ENCODE measurements at regions of chr2 and their contacts with region 1.

Region 1: DNA sequence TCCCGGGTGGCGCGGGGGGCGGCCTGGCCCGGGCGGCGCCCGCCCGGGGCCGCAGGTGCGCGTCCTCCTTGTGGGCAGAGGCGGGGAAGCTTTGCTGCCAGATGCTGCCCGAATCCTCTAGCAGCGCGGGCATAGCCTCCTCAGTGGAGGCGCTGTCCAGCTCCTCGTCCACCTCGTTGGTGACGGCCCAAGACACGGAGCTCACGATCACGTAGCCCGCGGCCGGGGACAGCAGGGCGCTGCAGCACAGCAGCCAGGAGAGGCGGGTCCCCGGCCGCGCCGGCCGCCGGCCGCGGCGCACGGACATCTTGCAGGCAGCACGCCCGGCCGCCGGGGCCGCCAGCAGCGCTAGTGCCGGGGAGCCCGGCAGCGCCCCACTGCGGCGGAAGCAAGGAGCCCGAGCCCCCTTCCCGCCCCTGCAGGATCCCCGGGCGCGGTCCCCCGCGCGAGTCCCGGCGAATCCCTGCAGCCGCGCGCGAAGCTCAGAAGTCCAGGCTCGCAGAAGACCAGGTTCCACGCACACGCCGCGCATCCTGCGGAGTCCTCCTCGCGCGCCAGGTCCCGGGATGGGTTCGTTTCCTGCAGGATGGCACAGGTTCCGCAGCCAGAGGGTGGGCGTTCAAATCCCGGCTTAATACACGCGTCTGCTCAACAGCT is at the start of gene CREG2:
- DNase-seq: peak; percentile 34
- H3K4me3 Mint-ChIP-seq: peak within 1 kb of the TSS; percentile 62
- H3K27ac Mint-ChIP-seq: no peak within 1 kb of the TSS
- H3K4me1 Mint-ChIP-seq: peaks cover 5% of the 10 kb centered on the region
- H3K27me3 Mint-ChIP-seq: no peaks in the 10 kb centered on the region
- CTCF ChIP-seq: peak; percentile 66
- total RNA-seq, gene CREG2: not detected in 2 replicates

Region 2: DNA sequence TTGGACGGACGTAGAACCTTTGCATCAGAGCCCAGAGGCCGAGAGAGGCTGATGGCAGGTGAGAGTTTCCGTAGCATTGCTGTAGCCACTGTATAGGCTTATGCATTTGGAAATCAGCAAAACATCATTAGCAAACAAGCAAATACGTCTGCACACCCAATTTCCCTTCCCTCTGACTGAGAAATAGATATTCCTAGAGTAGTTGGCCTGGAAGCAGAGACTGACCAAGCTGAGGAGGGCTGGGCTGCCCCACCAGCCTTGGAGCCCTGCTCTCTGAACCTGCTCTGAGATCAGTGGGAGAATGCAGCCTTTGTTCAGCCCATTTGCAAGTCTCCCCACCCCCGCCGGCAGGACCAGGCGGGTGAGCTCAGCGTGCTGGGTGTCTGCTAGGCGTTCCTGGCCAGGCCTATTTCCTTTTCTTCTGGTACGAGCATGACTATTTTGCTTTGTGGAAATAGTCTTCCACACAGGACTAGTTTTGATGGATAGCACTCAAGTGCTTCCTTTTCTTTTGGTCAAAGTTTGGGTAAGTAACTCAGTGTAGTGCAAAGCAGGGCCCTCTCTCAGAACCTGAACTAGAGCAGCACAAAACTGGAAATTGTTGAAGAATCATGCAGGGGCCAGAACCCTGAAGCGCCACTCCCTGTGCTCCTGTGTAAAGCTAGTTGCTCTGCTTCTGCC is 56.9 kb before region 1 on chr2:
- CTCF ChIA-PET with region 1: interaction called, 12 read pairs
- POLR2A ChIA-PET with region 1: interaction called, 3 read pairs
- intact Hi-C with region 1: no loop called
- DNase-seq: no peak
- H3K4me3 Mint-ChIP-seq: no peak overlapping the region
- H3K27ac Mint-ChIP-seq: no peak overlapping the region
- H3K4me1 Mint-ChIP-seq: no peaks in the 10 kb centered on the region
- H3K27me3 Mint-ChIP-seq: no peaks in the 10 kb centered on the region
- CTCF ChIP-seq: no peak

Region 3: GRCh38 chr2:101341901-101342624 is 45.2 kb before region 1 on chr2:
- CTCF ChIA-PET with region 1: interaction called, 23 read pairs
- POLR2A ChIA-PET with region 1: interaction called, 4 read pairs
- intact Hi-C with region 1: loop called (anchors 2 kb)
- DNase-seq: peak; percentile 78
- H3K4me3 Mint-ChIP-seq: no peak overlapping the region
- H3K27ac Mint-ChIP-seq: no peak overlapping the region
- H3K4me1 Mint-ChIP-seq: peaks cover 5% of the 10 kb centered on the region
- H3K27me3 Mint-ChIP-seq: no peaks in the 10 kb centered on the region
- CTCF ChIP-seq: peak; percentile 78

Region 4: GRCh38 chr2:101349893-101350662 is 37.2 kb before region 1 on chr2:
- CTCF ChIA-PET with region 1: interaction called, 27 read pairs
- POLR2A ChIA-PET with region 1: interaction called, 3 read pairs
- intact Hi-C with region 1: no loop called
- DNase-seq: peak; percentile 20
- H3K4me3 Mint-ChIP-seq: no peak overlapping the region
- H3K27ac Mint-ChIP-seq: no peak overlapping the region
- H3K4me1 Mint-ChIP-seq: peaks cover 6% of the 10 kb centered on the region
- H3K27me3 Mint-ChIP-seq: no peaks in the 10 kb centered on the region
- CTCF ChIP-seq: no peak

Region 5: DNA sequence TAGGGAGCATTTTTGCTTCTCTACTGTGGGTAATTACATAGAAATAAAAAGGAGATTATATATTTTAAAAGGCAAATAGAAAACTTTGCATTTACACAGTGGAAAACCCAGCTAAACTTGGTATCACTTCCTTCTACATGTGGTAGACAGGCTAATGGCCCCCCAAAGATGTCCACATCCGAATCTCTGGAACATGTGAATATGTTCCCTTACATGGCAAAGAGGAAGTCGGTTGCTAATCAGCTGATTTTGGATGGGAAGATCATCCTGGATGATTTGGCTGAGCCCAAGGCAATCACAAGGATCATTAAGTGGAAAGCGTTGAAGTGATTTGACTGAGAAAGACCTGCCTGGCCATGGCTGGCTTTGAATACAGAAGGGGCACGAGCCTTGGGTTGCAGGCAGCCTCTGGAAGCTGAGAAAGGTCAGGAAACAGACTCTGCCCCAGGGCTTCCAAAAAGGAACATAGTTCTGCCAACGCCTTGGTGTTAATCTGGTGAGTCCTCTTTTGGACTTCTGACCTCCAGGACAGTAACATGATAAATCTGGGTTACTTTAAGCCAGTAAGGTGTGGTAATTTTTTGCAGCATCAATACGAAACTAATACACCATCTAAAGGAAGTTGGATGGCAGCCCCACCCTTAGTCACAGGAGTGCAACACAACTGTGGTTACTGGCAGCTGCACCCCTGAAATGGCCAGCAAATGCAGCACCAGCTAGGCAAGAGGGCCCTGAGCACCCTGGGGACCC is 26.0 kb before region 1 on chr2:
- CTCF ChIA-PET with region 1: interaction called, 7 read pairs
- POLR2A ChIA-PET with region 1: interaction called, 19 read pairs
- intact Hi-C with region 1: no loop called
- DNase-seq: peak; percentile 26
- H3K4me3 Mint-ChIP-seq: no peak overlapping the region
- H3K27ac Mint-ChIP-seq: no peak overlapping the region
- H3K4me1 Mint-ChIP-seq: peaks cover 34% of the 10 kb centered on the region
- H3K27me3 Mint-ChIP-seq: no peaks in the 10 kb centered on the region
- CTCF ChIP-seq: no peak

Region 6: GRCh38 chr2:101450965-101451364 is 63.7 kb after region 1 on chr2:
- CTCF ChIA-PET with region 1: no interaction called
- POLR2A ChIA-PET with region 1: no interaction called
- intact Hi-C with region 1: no loop called
- DNase-seq: no peak
- H3K4me3 Mint-ChIP-seq: no peak overlapping the region
- H3K27ac Mint-ChIP-seq: no peak overlapping the region
- H3K4me1 Mint-ChIP-seq: peaks cover 14% of the 10 kb centered on the region
- H3K27me3 Mint-ChIP-seq: no peaks in the 10 kb centered on the region
- CTCF ChIP-seq: no peak